Activated B cell treated with CpG ODN at 0.5 μM for 24 hours (primary cell): ENCODE measurements at regions of chr3 and their contacts with region 1.

Region 1: GRCh38 chr3:195442573-195443390 is at the start of gene ACAP2:
- DNase-seq: peak; percentile 100
- ATAC-seq: peak; percentile 89
- H3K4me3 Mint-ChIP-seq: peak within 1 kb of the TSS; percentile 95
- H3K27ac Mint-ChIP-seq: peak within 1 kb of the TSS; percentile 93
- H3K4me1 Mint-ChIP-seq: peaks cover 42% of the 10 kb centered on the region
- H3K27me3 Mint-ChIP-seq: no peaks in the 10 kb centered on the region
- CTCF ChIP-seq: no peak
- total RNA-seq, gene ACAP2: 75.5 and 89.7 TPM in 2 replicates

Region 2: DNA sequence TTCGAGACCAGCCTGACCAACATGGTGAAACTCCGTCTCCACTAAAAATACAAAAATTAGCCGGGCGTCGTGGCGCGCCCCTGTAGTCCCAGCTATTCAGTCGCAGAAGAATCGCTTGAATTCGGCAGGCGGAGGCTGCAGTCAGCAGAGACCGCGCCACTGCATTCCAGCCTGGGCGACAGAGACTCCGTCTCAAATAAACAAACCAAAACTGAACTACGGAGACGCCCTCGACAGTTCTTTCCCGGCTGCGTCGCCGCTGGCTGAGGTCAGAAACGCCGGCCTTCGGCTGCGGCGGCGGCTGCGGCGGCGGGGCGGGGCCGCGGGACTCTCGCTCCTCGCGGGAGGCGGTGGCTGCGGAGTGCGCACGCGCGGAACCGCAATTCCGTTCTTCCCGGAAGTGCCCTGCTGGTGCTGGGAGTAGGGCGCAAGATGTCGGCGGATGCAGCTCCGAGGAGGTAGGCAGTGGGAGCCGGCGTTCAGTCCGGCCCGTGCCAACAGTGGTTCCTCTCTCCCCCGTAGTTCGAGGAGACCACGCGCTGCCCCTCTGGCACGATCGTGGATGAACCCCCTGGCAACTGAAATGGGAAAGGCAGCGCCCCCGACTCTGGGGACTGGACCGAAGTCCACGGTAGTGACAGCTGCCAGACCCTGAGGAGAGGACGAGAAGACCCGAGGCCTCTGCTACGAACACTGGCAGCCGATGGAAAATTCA is 859.0 kb before region 1 on chr3:
- CTCF ChIA-PET with region 1: no interaction called
- POLR2A ChIA-PET with region 1: no interaction called
- intact Hi-C with region 1: loop called (anchors 5 kb)
- DNase-seq: peak; percentile 95
- ATAC-seq: peak; percentile 92
- H3K4me3 Mint-ChIP-seq: peak overlapping the region; percentile 94
- H3K27ac Mint-ChIP-seq: peak overlapping the region; percentile 97
- H3K4me1 Mint-ChIP-seq: peaks cover 16% of the 10 kb centered on the region
- H3K27me3 Mint-ChIP-seq: no peaks in the 10 kb centered on the region
- CTCF ChIP-seq: no peak

Region 3: DNA sequence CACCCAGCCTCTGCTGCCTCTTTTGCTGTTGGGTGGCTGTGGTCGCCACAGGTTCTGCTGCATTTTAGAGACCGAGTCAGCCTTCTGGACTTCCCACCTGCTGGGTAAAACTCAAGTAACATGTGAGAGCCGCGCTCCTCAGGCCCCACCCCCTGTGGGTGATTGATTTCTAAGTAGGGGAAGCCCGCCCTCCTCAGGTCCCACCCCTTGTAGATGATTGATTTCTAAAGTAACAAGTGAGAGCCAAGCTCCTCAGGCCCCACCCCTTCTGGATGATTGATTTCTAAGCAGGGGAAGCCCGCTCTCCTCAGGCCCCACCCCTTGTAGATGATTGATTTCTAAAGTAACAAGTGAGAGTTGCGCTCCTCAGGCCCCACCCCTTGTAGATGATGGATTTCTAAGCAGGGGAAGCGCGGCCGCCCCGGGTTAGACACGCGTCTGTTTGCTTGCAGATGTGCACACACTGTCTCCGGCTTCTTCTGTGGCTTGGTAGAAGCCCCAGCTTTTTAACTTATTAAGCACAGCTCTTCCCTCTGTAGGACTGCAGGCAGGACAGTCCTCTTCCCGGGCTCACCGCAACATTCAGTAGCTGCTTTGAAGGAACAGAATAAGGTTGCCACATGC is 673.6 kb before region 1 on chr3:
- CTCF ChIA-PET with region 1: no interaction called
- POLR2A ChIA-PET with region 1: no interaction called
- intact Hi-C with region 1: loop called (anchors 2 kb)
- DNase-seq: peak; percentile 69
- ATAC-seq: peak; percentile 98
- H3K4me3 Mint-ChIP-seq: peak overlapping the region; percentile 86
- H3K27ac Mint-ChIP-seq: peak overlapping the region; percentile 94
- H3K4me1 Mint-ChIP-seq: peaks cover 34% of the 10 kb centered on the region
- H3K27me3 Mint-ChIP-seq: peaks cover 5% of the 10 kb centered on the region
- CTCF ChIP-seq: no peak

Region 4: DNA sequence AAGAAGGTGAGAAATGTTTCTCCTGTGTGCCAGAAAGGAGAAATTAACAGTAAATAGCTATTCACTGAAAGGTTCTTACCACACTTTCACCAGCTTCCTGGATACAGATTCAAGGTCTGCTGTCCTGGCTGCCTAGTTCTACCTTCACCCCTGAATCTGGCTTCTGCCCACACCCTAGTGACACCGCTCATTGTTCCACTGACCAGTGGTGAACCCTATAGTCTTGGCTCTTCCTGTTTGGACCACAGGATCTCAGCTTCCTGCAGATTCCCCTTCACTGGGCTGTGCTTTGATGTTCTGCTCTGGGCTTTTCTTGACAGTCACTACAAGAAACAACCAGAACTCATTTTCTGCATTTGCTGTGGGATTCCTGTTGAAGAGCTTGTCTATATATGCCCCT is 421.9 kb before region 1 on chr3:
- CTCF ChIA-PET with region 1: no interaction called
- POLR2A ChIA-PET with region 1: no interaction called
- intact Hi-C with region 1: no loop called
- DNase-seq: no peak
- ATAC-seq: no peak
- H3K4me3 Mint-ChIP-seq: no peak overlapping the region
- H3K27ac Mint-ChIP-seq: no peak overlapping the region
- H3K4me1 Mint-ChIP-seq: peaks cover 5% of the 10 kb centered on the region
- H3K27me3 Mint-ChIP-seq: peaks cover 18% of the 10 kb centered on the region
- CTCF ChIP-seq: no peak

Region 5: GRCh38 chr3:195312714-195313113 is 130.1 kb before region 1 on chr3:
- CTCF ChIA-PET with region 1: no interaction called
- POLR2A ChIA-PET with region 1: interaction called, 10 read pairs
- intact Hi-C with region 1: no loop called
- DNase-seq: no peak
- ATAC-seq: no peak
- H3K4me3 Mint-ChIP-seq: no peak overlapping the region
- H3K27ac Mint-ChIP-seq: no peak overlapping the region
- H3K4me1 Mint-ChIP-seq: no peaks in the 10 kb centered on the region
- H3K27me3 Mint-ChIP-seq: no peaks in the 10 kb centered on the region
- CTCF ChIP-seq: no peak

Region 6: DNA sequence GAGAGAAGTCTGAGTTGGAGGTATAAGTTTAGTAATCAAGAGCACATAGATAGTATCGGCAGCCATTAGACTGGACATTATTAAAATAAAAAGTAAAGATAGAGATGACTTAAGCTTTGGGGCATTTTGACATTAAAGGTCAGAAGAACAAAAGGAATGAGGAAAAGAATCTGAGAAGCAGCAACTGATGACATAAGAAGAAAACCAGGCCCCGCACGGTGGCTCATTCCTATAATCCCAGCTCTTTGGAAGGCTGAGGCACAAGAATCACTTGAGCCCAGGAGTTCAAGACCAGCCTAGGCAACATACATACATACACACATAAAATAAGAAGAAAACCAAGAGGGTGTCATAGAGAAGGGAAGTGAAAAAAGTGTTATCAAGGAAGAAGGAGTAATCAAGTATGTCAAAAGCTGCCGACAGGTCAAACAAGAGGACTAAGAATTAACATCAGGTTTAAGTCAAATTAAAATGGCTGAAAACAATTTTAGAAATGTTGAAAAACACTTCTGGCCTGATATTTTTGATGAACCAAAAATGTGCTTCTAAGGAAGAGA is 38.9 kb before region 1 on chr3:
- CTCF ChIA-PET with region 1: no interaction called
- POLR2A ChIA-PET with region 1: interaction called, 4 read pairs
- intact Hi-C with region 1: loop called (anchors 2 kb)
- DNase-seq: no peak
- ATAC-seq: peak; percentile 57
- H3K4me3 Mint-ChIP-seq: no peak overlapping the region
- H3K27ac Mint-ChIP-seq: no peak overlapping the region
- H3K4me1 Mint-ChIP-seq: peaks cover 59% of the 10 kb centered on the region
- H3K27me3 Mint-ChIP-seq: no peaks in the 10 kb centered on the region
- CTCF ChIP-seq: no peak

Region 7: DNA sequence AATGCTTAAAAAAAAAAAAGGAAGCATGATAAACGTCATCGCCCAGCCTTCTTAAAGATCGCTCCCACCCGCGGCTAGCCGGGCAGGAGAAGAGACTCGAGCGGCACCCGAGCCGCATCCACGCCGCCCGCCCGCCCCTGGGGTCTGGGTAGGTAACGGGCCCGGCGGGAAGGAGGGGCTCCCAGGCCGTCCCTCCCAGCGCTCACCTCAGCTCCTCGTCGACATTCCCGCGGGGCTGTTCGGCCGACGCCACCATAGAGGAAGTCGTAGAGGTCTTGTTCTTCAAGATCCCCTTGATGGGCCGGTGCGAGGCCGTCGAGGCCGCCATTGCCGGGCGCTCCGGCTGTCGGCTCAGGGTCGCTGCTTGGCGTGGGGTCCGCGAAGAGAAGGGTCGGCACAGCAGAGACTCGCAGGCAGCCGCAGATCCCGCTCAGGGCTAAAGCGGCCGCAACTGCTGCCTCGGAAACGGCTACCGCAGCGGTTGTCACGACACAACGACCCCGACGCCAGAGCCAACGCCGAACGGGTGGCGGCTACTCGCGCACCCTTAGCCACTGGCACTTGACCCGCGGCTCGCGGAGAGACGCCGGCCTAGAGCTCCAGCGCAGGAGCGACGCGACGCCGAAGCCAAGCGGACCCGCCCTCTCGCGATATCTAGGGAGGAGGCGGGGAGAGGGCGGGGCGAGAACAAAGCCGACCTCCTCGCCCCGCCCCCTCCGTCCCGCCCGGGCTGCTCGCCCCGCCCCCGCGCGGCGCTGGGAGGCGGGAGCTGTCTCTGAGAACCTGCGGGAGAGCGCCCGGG is 100.1 kb after region 1 on chr3 and contains the start of gene PPP1R2:
- CTCF ChIA-PET with region 1: no interaction called
- POLR2A ChIA-PET with region 1: interaction called, 20 read pairs
- intact Hi-C with region 1: loop called (anchors 1 kb)
- DNase-seq: peak; percentile 95
- ATAC-seq: peak; percentile 84
- H3K4me3 Mint-ChIP-seq: peak within 1 kb of the TSS; percentile 91
- H3K27ac Mint-ChIP-seq: peak within 1 kb of the TSS; percentile 92
- H3K4me1 Mint-ChIP-seq: peaks cover 76% of the 10 kb centered on the region
- H3K27me3 Mint-ChIP-seq: no peaks in the 10 kb centered on the region
- CTCF ChIP-seq: no peak
- total RNA-seq, gene PPP1R2: 62.5 and 64.1 TPM in 2 replicates

Region 8: DNA sequence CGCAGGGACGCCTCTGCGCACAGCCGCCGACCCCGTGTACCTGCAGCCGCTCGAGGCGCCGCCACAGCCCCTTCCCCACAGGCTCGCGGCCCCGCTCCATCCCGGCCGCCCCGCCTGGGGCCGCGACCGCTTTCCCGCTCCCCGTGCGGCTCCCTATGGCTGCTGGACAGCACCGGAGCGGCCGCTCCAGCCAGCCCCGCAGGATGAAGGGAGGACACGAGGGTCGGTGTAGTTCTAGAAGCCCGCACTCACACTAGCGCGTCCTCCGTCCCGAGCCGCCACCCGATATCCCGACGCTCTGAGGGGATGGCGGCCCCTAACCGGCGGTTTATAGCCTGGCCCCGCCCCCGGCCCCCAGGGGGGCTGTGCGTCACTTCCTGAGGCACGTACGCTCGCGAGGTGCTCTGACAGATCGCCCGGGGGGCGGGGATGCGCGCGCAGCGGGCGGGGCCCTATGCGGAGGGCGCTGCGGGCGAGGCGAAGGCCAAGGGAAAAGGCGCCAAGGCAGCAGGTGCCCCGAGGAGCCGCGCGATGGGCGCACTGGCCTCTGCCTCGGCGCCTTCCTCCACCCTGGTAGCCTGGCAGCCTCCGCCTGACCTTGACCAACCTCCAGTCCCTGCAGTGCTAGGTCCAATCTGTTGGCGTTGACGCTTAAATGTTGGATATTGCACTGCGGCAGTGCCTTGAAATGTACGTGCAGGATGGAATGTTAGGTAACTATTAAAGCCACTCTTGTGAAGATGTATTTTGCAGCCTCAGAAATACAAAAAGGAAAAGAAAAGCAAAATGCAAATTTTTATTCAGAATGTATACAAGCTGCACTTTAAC is 639.2 kb after region 1 on chr3 and contains the start of gene TFRC:
- CTCF ChIA-PET with region 1: no interaction called
- POLR2A ChIA-PET with region 1: no interaction called
- intact Hi-C with region 1: loop called (anchors 5 kb)
- DNase-seq: peak; percentile 99
- ATAC-seq: peak; percentile 94
- H3K4me3 Mint-ChIP-seq: peak within 1 kb of the TSS; percentile 99
- H3K27ac Mint-ChIP-seq: peak within 1 kb of the TSS; percentile 91
- H3K4me1 Mint-ChIP-seq: peaks cover 47% of the 10 kb centered on the region
- H3K27me3 Mint-ChIP-seq: no peaks in the 10 kb centered on the region
- CTCF ChIP-seq: no peak
- total RNA-seq, gene TFRC: 238 and 290 TPM in 2 replicates